ENCODE measurements at regions of chr7 and their contacts with region 1.

Region 1: DNA sequence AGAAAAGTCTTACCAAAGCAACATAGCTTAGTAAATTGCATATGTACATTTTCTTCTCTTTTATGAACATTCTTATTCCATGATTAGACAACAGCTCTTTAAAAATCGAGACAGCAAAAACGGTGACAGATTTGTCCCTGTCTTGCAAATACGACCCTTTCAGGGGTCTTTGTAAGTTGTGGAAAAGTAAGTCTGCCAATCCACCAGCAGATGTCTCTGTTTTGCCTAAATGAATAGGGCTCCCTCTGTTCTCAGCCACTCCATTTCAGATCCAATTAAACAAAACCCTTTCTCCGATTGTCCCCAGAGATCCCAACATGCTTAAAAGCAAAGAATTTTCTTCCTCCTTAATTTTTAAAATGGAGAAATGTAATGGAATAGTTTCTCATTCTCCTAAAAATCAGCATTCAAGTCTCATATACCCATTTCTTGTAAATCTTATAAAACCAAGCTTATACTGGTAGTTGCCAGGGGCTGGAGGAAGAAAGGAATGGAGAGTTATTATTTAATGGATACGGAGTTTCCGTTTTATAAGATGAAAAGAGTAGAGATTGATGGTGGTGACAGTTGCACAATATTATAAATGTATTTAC is 61.0 kb upstream of the NFE2L3 start:
- DNase-seq: peak; percentile 45 to 64
- ATAC-seq: peak; percentile 68 to 87; a peak in 5 of 6 replicates
- H3K4me3 ChIP-seq: no peak overlapping the region
- H3K27ac ChIP-seq: no peak overlapping the region
- H3K4me1 ChIP-seq: no peaks in the 10 kb centered on the region
- CTCF ChIP-seq: peak; percentile 87
- EP300 ChIP-seq: no peak
- POLR2A ChIP-seq: no peak
- RAD21 ChIP-seq: peak; percentile 78 to 80

Region 2: GRCh38 chr7:26078437-26079336 is 12.3 kb before region 1 on chr7:
- CTCF ChIA-PET with region 1: interaction called, 46 read pairs
- POLR2A ChIA-PET with region 1: no interaction called
- DNase-seq: peak; percentile 69 to 78
- ATAC-seq: peak; percentile 99 to 100
- H3K4me3 ChIP-seq: peak overlapping the region; percentile 34; the same call in 1 of the 3 replicates
- H3K27ac ChIP-seq: no peak overlapping the region
- H3K4me1 ChIP-seq: peaks cover 6% of the 10 kb centered on the region; the same call in 1 of the 3 replicates
- CTCF ChIP-seq: peak; percentile 58
- EP300 ChIP-seq: no peak
- POLR2A ChIP-seq: no peak
- RAD21 ChIP-seq: peak; percentile 63 to 64; a peak in 4 of 5 replicates

Region 3: DNA sequence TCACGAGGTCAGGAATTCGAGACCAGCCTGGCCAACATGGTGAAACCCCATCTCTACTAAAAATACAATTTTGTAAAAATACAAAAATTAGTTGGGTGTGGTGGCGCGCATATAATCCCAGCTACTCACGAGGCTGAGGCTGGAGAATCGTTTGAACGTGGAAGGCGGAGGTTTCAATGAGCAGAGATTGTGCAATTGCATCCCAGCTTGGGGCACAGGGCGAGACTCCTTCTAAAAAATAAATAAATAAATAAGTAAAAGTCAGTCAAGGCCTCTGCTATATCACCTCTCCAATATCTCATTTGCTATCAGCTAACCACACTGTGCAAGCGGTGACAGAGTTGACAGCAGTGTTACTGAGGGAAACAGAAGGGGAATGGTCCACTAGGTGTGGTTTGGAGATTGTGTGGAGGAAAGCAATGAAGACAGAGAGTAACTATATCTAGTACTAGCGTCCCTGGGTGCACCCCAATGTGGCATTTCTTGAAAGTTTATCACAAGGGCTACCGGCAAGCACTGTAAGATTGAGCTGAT is 40.1 kb after region 1 on chr7:
- CTCF ChIA-PET with region 1: interaction called, 32 read pairs
- POLR2A ChIA-PET with region 1: no interaction called
- DNase-seq: no peak
- ATAC-seq: no peak
- H3K4me3 ChIP-seq: no peak overlapping the region
- H3K27ac ChIP-seq: no peak overlapping the region
- H3K4me1 ChIP-seq: no peaks in the 10 kb centered on the region
- CTCF ChIP-seq: no peak
- EP300 ChIP-seq: no peak
- POLR2A ChIP-seq: no peak
- RAD21 ChIP-seq: no peak

Region 4: GRCh38 chr7:26160881-26161280 is 69.9 kb after region 1 on chr7:
- CTCF ChIA-PET with region 1: interaction called, 16 read pairs
- POLR2A ChIA-PET with region 1: no interaction called
- DNase-seq: no peak
- ATAC-seq: no peak
- H3K4me3 ChIP-seq: no peak overlapping the region
- H3K27ac ChIP-seq: no peak overlapping the region
- H3K4me1 ChIP-seq: peaks cover 11% of the 10 kb centered on the region; the same call in 2 of the 3 replicates
- CTCF ChIP-seq: no peak
- EP300 ChIP-seq: no peak
- POLR2A ChIP-seq: no peak
- RAD21 ChIP-seq: no peak

Region 5: GRCh38 chr7:26193432-26194207 is 102.6 kb after region 1 on chr7:
- CTCF ChIA-PET with region 1: interaction called, 46 read pairs
- POLR2A ChIA-PET with region 1: interaction called, 6 read pairs
- DNase-seq: no peak
- ATAC-seq: peak in 1 of 2 experiments; percentile 18; a peak in 3 of 6 replicates
- H3K4me3 ChIP-seq: peak overlapping the region; percentile 89
- H3K27ac ChIP-seq: no peak overlapping the region
- H3K4me1 ChIP-seq: peaks cover 84% of the 10 kb centered on the region
- CTCF ChIP-seq: no peak
- EP300 ChIP-seq: no peak
- POLR2A ChIP-seq: no peak
- RAD21 ChIP-seq: no peak

Measured in A549 (cell line).